Activated T-helper 2 cell treated with anti-CD3 and anti-CD28 coated beads, Interferon-gamma antibody, Interleukin-2, Interleukin-4, amounts not matched to agents 10 μg/mL and 5 μg/mL and 100 μg/mL, durations not matched to agents 14 hours and 24 hours and 36 hours (primary cell): ENCODE measurements at regions of chr5 and their contacts with region 1.

Region 1: GRCh38 chr5:91419571-91420537 is 36.7 kb upstream of the ARRDC3 start:
- DNase-seq: peak; percentile 43
- H3K4me3 Mint-ChIP-seq: no peak overlapping the region
- H3K27ac Mint-ChIP-seq: no peak overlapping the region
- H3K4me1 Mint-ChIP-seq: peaks cover 11% of the 10 kb centered on the region
- H3K27me3 Mint-ChIP-seq: peaks cover 2% of the 10 kb centered on the region

Region 2: DNA sequence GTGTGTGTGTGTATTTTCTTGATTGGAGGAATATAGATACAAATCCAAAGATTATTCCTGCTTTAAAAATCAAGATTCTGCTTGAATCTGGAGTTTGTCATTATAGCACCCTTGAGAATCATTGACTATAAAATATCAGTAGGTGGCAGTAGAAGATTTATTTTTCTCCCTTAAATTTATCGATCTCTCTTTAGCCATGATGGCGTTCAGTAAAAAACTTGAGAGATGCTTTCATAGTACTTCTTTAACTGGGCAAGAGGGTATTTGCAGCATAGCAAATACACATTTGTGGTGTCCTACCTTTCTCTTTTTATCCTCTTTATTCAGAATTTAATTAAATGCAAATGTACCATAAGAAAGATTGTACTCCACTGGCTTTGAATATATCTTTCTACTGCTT is 553.5 kb before region 1 on chr5:
- intact Hi-C with region 1: loop called (anchors 1 kb)
- DNase-seq: no peak
- H3K4me3 Mint-ChIP-seq: no peak overlapping the region
- H3K27ac Mint-ChIP-seq: no peak overlapping the region
- H3K4me1 Mint-ChIP-seq: peaks cover 9% of the 10 kb centered on the region
- H3K27me3 Mint-ChIP-seq: peaks cover 15% of the 10 kb centered on the region

Region 3: DNA sequence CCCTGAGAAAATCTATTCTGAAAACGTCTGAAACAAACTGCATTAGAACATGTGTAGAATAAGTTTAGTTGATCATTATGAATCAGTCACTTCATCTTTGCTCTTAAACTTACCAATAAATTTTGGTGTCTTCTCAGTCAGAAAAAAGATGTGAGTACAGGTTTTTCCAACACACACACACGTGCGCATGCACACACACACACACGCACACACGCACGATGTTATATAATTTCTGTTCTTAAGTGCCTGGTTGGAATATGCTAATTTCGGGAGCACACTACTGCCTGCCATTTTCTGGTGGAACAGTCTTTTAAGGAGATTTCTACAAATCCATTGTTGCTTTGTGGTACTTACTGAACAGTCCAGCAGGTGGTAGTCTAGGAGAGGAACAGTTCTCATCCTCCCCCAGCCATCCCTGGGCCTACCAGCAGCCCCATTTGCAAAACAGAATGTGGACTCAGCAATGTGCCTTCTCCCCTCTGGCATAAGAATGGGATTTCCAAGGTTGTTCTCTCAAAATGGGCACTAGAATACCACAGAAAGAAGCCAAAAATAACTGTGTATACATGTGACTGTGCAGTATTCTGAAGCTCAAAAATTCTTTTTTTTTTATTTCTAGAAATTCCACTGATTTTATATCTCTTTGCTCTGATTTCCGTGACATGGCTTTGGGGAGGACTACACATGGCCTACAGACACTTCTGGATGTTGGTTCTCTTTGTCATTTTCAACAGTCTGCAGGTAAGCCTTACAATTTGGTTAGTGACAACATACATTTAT is 318.1 kb before region 1 on chr5:
- intact Hi-C with region 1: loop called (anchors 1 kb)
- DNase-seq: peak; percentile 33
- H3K4me3 Mint-ChIP-seq: no peak overlapping the region
- H3K27ac Mint-ChIP-seq: no peak overlapping the region
- H3K4me1 Mint-ChIP-seq: peaks cover 2% of the 10 kb centered on the region
- H3K27me3 Mint-ChIP-seq: peaks cover 9% of the 10 kb centered on the region

Region 4: DNA sequence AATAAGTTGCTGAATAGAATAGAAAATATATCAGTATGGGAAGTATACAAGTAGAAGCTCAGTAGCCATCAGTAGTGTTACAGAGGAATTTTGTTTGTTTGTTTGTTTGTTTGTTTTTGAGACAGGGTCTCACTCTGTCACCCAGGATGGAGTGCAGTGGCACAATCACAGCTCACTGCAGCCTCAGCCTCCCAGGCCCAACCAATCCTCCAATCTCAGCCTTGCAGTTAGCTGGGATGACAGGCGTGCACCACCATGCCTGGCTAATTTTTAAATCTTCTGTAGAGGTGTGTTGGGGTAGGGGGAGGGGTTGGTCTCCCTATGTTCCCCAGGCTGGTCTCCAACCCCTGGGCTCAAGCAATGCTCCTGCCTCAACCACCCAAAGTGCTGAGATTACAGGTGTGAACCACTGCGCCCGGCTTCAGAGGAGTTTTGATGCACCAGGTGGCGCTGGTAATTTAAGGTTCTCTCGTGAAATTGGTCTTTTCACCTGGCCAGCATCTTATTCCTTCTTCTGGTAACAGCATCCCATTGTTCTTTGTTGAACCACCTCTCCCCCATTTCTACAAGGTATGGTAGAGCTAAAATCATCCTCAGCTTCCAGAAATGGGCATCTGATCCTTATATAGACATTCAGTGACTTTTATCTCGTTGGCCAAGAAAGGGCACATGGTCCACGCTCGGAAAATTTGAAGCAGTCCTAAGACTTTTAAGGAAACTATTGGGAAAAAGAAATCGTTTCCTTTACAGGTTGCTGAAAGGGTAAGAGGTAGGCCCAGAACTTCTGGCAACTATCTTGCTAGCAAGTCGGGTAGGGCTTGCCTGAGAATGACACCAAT is 193.8 kb before region 1 on chr5:
- intact Hi-C with region 1: loop called (anchors 1 kb)
- DNase-seq: peak; percentile 26
- H3K4me3 Mint-ChIP-seq: no peak overlapping the region
- H3K27ac Mint-ChIP-seq: no peak overlapping the region
- H3K4me1 Mint-ChIP-seq: peaks cover 4% of the 10 kb centered on the region
- H3K27me3 Mint-ChIP-seq: peaks cover 18% of the 10 kb centered on the region